ENCODE measurements at regions of chr3 and their contacts with region 1.

Region 1: GRCh38 chr3:183447206-183448001 is 19.0 kb upstream of the MCF2L2 start:
- DNase-seq: peak; percentile 68
- ATAC-seq: peak; percentile 95
- H3K4me3 Mint-ChIP-seq: peak overlapping the region; percentile 95
- H3K27ac Mint-ChIP-seq: peak overlapping the region; percentile 81
- H3K4me1 Mint-ChIP-seq: peaks cover 16% of the 10 kb centered on the region
- H3K27me3 Mint-ChIP-seq: no peaks in the 10 kb centered on the region
- CTCF ChIP-seq: no peak

Region 2: DNA sequence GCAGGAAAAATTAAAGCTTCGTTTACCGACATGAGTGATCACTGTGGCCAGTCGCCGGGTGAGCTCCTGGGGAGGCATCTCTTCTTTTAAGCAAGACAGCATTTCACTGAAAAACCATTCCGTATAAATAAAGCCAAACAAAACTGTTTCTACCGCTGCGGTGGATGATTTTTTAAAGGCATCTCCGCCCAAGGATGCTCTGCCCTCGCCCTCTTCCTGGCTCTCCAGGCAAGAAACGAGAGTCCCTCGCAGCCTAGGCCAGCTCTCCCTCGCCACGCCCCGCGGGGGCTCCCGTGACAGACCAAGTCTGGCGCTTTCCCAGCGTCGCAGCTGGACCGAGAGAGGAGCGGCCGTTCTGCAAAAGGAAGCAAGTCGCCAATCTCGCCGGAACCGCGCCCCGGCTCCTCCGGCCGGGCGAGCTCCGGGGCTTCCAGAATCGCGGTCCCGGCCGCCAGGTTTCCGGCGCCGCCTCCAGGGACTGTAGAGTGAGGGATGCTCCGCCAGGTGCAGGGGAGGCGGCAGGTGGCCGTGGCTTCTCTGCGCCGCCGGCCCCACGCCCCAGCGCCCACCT is 19.4 kb before region 1 on chr3:
- CTCF ChIA-PET with region 1: no interaction called
- POLR2A ChIA-PET with region 1: interaction called, 7 read pairs
- intact Hi-C with region 1: loop called (anchors 2 kb)
- DNase-seq: no peak
- ATAC-seq: peak; percentile 47
- H3K4me3 Mint-ChIP-seq: peak overlapping the region; percentile 81
- H3K27ac Mint-ChIP-seq: no peak overlapping the region
- H3K4me1 Mint-ChIP-seq: peaks cover 7% of the 10 kb centered on the region
- H3K27me3 Mint-ChIP-seq: peaks cover 16% of the 10 kb centered on the region
- CTCF ChIP-seq: no peak

Region 3: GRCh38 chr3:183435661-183436060 is 11.7 kb before region 1 on chr3:
- CTCF ChIA-PET with region 1: no interaction called
- POLR2A ChIA-PET with region 1: no interaction called
- intact Hi-C with region 1: loop called (anchors 1 kb)
- DNase-seq: no peak
- ATAC-seq: peak; percentile 96
- H3K4me3 Mint-ChIP-seq: no peak overlapping the region
- H3K27ac Mint-ChIP-seq: no peak overlapping the region
- H3K4me1 Mint-ChIP-seq: peaks cover 21% of the 10 kb centered on the region
- H3K27me3 Mint-ChIP-seq: peaks cover 12% of the 10 kb centered on the region
- CTCF ChIP-seq: no peak

Measured in activated B cell treated with CpG ODN at 0.5 μM for 24 hours (primary cell).